Activated CD4-positive, alpha-beta memory T cell treated with anti-CD3 and anti-CD28 coated beads for 36 hours (primary cell): ENCODE measurements at regions of chr3 and their contacts with region 1.

Region 1: DNA sequence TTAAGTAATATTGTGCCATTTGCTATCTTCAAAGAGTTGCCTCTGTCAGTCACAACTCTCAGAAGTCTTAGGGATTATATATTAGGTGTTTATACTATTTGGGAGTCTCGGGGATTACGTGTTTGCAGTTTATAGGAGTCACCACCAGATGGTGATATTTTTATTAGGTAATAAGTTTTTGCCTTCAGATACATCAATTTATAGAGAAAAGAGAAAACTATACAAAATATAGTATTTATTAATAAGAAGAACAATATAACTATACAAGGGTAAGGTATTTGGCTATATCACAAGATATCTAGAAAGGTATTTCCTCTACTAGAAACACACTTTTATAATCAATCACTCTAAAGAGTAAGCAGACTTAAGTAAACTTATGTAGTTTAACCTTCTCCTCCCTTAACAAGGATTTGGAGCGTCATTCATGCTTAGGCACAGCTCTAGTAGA is 10.7 kb upstream of the DHX36 start:
- DNase-seq: no peak
- H3K4me3 Mint-ChIP-seq: no peak overlapping the region
- H3K27ac Mint-ChIP-seq: no peak overlapping the region
- H3K4me1 Mint-ChIP-seq: no peaks in the 10 kb centered on the region
- H3K27me3 Mint-ChIP-seq: peaks cover 8% of the 10 kb centered on the region

Region 2: GRCh38 chr3:155323063-155323666 is 988.2 kb after region 1 on chr3:
- CTCF ChIA-PET with region 1: interaction called, 3 read pairs
- POLR2A ChIA-PET with region 1: no interaction called
- intact Hi-C with region 1: loop called (anchors 2 kb)
- DNase-seq: no peak
- H3K4me3 Mint-ChIP-seq: no peak overlapping the region
- H3K27ac Mint-ChIP-seq: no peak overlapping the region
- H3K4me1 Mint-ChIP-seq: no peaks in the 10 kb centered on the region
- H3K27me3 Mint-ChIP-seq: peaks cover under 1% of the 10 kb centered on the region